Endothelial cell of umbilical vein (primary cell): ENCODE measurements at regions of chr4 and their contacts with region 1.

Region 1: GRCh38 chr4:39353478-39354253 is 12.5 kb downstream of the RFC1 start:
- DNase-seq: peak; percentile 83
- H3K4me3 ChIP-seq: peak overlapping the region; percentile 19 to 73 (median 27)
- H3K27ac ChIP-seq: peak overlapping the region; percentile 92
- H3K4me1 ChIP-seq: peaks cover 11% of the 10 kb centered on the region
- H3K27me3 ChIP-seq: no peaks in the 10 kb centered on the region
- CTCF ChIP-seq: no peak
- POLR2A ChIP-seq: peak; percentile 76

Region 2: GRCh38 chr4:39331191-39331590 is 22.5 kb before region 1 on chr4:
- CTCF ChIA-PET with region 1: interaction called, 3 read pairs
- POLR2A ChIA-PET with region 1: no interaction called
- dilution Hi-C with region 1: no loop called
- intact Hi-C with region 1: loop called (anchors 2 kb)
- DNase-seq: no peak
- H3K4me3 ChIP-seq: no peak overlapping the region
- H3K27ac ChIP-seq: no peak overlapping the region
- H3K4me1 ChIP-seq: no peaks in the 10 kb centered on the region
- H3K27me3 ChIP-seq: no peaks in the 10 kb centered on the region
- CTCF ChIP-seq: no peak
- POLR2A ChIP-seq: no peak